GM13976 (cell line): ENCODE measurements at regions of chr5 and their contacts with region 1.

Region 1: DNA sequence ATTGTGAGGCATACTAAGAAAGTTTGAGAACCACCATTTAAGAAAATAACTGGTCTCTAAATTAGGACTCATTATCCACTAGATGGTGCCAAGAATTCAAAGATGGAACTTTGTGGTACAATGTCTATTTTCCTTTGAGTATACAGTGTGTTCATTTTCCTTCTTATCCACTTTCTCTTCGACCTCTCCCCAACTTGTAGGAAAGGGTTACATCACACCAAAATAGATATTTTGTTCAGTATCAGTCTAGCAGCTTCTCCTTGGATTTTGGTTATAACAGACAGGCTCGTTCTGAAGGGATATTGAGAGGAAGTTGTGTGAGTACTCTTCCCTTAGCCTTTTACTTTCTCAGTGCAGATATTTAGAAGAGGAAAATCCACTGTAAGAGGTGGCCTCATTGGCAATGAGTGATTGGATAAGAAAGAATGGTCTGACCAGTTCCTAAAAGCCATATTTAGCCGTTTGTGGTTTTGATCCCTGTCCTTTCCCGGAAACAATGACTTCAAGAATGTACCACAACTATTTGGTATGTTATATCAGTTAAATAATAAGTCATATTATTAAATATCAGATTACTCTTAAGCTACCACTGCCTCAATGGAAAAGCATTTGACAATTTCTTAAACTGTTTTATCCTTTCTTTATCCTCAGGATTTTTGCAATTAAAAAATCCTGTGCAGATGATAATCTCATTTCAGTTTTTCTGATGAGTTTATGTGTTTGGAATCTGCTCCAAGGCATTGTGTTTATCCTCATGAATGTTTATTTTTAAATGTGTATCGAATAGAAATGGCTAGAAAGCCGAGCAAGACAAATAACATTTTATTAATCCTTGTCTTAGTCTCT is 69.0 kb upstream of the GRAMD2B start:
- DNase-seq: peak; percentile 53
- CTCF ChIP-seq: peak; percentile 17

Region 2: DNA sequence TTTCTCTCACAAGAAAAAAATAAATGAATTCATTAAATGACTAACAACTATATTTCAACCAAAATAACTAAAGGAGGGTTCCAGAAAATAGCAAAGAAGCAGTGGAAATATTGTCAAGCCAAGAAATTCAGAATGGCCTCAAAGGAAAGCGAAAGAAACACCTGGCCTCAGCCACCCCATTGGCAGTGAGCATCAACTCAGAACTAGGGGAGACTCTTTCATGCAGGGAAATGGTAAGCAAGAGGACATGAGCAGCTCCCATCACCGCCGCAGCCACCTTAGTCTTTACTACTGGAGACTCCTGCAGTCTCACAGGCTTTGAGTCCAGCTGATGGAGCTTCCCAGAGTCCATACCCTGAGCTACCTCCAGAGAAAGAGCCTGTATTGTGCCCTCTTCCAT is 275.0 kb before region 1 on chr5:
- in situ Hi-C with region 1: no loop called
- DNase-seq: no peak
- CTCF ChIP-seq: no peak

Region 3: DNA sequence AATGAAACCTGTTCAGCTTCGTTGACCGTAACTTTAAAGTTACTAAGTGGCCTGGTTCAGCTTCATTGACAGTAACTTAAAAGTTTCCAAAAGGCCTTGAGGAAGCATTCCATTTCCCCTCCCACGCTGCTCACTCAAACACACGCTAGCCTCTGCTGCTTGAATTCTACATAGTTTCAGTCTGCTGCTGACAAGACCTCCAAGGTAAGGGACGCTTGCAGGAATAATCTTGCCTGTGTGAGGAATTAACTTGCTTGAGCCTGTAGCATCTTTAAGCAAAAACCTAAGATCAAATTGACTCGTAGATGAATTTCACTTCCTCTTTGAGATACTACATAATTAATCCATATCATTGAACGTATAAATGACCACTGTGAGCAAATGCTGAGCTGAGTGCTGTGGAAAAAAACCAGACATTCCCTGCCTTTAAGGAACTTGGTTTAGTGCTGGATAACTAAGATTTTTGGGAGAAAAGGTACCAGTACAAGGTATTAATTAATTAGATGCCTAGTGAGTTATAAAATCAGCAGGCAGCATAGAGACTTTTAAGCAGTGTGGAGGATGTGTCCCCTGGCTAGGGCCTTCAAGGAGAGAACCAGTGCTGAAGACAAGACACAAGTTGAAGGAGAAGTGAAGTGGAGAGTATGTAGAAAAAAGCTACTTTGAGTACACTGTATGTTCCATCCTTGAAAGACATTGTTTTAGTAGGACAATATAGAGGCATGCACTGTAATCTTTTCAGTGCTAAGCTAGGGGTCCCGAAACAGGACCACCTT is 108.2 kb after region 1 on chr5:
- in situ Hi-C with region 1: no loop called
- DNase-seq: peak; percentile 44
- CTCF ChIP-seq: no peak

Region 4: DNA sequence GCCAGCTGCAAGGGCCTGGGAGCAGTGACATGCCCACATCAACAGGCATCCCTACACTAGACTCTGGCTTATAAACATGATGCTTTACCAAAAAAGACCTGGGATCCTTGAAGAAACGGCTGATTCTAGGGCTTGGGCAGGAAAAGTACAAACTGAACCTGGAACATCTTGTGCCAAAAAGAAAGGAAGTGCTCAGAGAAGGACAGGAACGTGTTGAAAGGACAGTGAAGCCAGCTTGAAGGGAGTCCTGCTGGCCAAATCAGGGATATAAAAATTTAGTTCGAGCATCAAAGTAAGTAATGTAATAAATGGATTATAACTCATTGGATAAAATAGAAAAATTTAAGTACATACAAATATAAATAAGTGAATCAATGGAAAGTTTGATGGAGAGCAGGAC is 182.6 kb after region 1 on chr5:
- in situ Hi-C with region 1: loop called (anchors 5 kb)
- DNase-seq: no peak
- CTCF ChIP-seq: no peak

Region 5: DNA sequence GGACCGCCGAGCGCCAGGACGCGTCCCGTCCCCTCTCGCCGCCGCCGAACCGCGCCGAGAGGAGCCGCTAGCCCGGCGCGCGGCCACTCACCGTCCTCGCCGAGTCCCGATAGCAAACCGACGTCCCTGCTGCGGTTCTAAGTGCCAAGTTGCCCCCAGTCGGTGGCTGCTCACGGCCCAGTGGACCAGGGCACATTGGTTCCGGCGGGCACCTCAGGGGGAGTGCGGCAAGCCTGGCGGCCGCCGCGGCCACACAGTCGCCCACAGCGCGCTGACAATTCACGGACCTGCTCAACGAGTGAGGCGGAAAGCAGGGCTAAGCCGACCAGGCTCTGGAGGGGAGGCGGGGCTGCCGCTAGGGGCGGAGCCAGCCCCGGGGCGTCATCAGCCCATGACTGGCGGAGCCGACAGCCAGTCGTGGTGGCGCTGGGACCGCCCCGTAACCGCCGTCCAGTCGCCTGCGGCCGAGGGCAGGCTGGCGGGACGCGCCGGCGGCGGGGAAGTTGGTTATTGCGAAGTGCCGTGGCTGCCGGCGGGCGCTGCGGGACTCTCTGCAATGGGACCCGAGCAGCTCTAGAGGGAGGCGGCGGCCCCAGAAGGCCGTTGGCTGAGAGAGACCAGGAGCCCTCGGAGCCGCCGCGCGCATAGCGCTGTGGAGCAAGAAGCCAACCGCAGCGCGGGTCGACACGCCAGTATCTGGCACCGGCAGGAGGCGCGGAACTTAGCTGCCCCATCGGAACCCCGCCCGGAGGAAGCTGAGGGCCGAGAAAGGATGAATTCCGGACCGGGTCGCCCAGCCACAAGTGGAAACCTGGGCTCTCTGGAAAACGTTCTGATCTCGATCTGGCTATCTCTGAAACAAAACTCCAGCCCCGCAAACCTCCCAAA is 676.3 kb after region 1 on chr5 and contains the start of gene MARCHF3:
- in situ Hi-C with region 1: no loop called
- DNase-seq: peak; percentile 99
- CTCF ChIP-seq: peak; percentile 16